ENCODE measurements at regions of chr6 and their contacts with region 1.

Region 1: GRCh38 chr6:12233693-12234571 is 56.2 kb upstream of the EDN1 start:
- DNase-seq: peak in 5 of 10 donors; percentile 14 to 79 (median 29)

Region 2: DNA sequence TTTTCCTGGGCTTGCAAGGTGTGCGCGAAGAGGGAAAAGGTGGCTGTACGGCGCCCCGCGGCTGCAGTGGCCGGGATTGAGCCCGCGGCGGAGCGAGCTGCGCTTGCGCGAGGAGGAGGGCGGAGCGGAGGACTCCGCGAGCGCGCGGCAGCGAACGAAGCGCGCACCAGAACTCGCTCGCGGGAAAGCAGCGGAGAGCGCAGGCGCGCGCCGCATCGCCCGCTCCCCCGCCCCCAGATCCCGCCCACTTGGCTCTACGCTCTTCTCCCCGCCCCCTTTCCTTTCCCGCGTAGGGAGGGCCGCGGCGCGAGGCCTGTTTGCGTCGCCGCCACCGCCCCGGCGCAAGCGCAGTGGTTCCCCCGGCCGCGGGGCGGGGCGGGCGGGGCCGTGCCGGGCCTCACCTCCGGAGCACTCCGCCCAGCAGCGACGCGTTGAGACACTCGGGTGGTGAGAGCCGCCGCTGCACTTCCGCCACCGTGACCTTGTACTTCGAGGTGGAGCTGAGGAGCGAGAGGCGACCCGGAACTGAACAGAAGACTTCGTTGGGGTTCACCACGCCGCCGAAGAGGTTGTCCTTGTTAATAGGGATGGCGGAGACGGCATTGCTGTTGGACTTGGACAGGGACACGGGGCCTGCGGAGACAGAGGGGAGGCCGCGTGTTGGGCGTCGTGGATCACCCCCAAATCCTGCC is 1829.7 kb before region 1 on chr6:
- intact Hi-C with region 1: no loop called
- DNase-seq: peak; percentile 69 to 98 (median 80)

Region 3: GRCh38 chr6:11585426-11586016 is 648.4 kb before region 1 on chr6:
- intact Hi-C with region 1: loop called (anchors 5 kb)
- DNase-seq: no peak

Region 4: GRCh38 chr6:11653028-11653583 is 580.8 kb before region 1 on chr6:
- intact Hi-C with region 1: loop called (anchors 1 kb)
- DNase-seq: peak in 1 of 10 donors; percentile 66

Region 5: GRCh38 chr6:11700118-11700718 is 533.7 kb before region 1 on chr6:
- intact Hi-C with region 1: loop called (anchors 5 kb)
- DNase-seq: no peak

Region 6: GRCh38 chr6:12011276-12012076 is 222.5 kb before region 1 on chr6:
- intact Hi-C with region 1: loop called (anchors 10 kb)
- DNase-seq: peak; percentile 82 to 98 (median 90)

Region 7: GRCh38 chr6:12150812-12151432 is 83.0 kb before region 1 on chr6:
- intact Hi-C with region 1: loop called (anchors 2 kb)
- DNase-seq: peak in 8 of 10 donors; percentile 27 to 91 (median 61)

Measured in posterior cingulate gyrus (tissue), 11 donors.